Heart left ventricle (tissue), 16 donors: ENCODE measurements at regions of chr12 and their contacts with region 1.

Region 1: GRCh38 chr12:43196268-43196907 is 355.6 kb downstream of the ADAMTS20 start:
- DNase-seq: no peak
- ATAC-seq: no peak
- H3K4me3 ChIP-seq: no peak overlapping the region
- H3K27ac ChIP-seq: no peak overlapping the region
- H3K4me1 ChIP-seq: no peaks in the 10 kb centered on the region
- H3K27me3 ChIP-seq: no peaks in the 10 kb centered on the region
- CTCF ChIP-seq: no peak
- POLR2A ChIP-seq: no peak

Region 2: DNA sequence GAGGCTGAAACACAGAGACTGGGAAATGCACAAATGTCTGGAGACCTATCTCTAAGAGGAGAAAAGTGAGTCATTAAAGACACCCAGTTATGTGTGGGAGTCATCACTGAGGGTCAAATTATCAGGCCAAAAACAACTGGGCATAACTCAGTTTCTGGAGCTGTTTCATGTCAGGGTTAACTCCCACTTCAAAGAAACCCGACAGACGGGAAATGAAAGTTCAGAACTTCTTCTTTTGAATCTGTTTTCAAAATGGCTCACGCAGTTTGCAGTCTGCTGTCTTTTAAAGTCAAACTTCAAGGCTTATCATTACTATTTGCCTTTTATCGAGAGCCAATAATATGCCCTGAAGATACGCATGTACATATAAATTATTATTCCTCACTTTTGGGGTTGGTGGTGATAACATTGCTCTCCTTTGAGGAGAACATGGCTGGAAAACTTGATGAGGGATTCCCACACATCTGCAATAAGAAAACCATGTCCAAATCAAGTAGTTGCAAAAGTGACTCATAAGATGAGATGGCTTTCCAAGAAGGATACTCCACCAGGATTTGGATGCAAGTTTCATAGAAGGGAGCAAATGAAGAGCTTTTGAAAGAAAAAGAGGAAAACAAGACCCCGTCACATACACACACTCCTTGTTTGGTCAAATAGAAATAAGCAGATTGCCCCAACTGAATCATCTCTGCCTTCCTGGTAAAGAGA is 14.3 kb after region 1 on chr12:
- intact Hi-C with region 1: loop called in 1 of 10 experiments (anchors 2 kb)
- DNase-seq: no peak
- ATAC-seq: peak in 3 of 4 donors; percentile 53 to 82 (median 67)
- H3K4me3 ChIP-seq: peak overlapping the region in 1 of 12 donors; percentile 11
- H3K27ac ChIP-seq: peak overlapping the region in 7 of 12 donors; percentile 43 to 67 (median 54)
- H3K4me1 ChIP-seq: peaks cover 0 to 21% (median 0%) of the 10 kb centered on the region in 12 donors
- H3K27me3 ChIP-seq: no peaks in the 10 kb centered on the region
- CTCF ChIP-seq: no peak
- POLR2A ChIP-seq: no peak